HCT116 (cell line): ENCODE measurements at regions of chr7 and their contacts with region 1.

Region 1: DNA sequence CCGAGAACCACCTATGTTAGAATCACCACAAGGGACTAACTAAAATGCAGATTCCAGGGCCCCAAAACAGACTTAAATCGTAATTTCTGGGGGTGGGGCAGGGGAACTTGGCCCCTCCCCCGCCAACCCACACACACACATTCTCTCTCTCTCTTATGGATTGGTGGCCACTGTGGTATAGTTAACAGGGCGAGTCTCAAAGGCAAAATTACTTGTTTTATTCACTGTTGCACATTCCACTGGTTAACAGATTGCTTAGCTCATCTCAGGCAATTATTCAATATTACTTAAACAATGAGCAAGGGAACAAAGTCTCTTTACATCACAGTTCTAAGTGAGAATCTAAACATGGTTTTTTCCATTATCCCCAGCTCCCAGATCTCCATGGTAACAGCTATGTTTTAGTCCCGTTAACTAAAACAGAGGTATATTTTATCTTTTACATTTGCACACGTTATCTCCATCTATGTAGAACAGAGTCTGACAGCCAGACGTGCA is 38.5 kb downstream of the IGF2BP3 start:
- DNase-seq: no peak
- ATAC-seq: no peak
- H3K4me3 ChIP-seq: no peak overlapping the region
- H3K27ac ChIP-seq: no peak overlapping the region
- H3K4me1 ChIP-seq: peaks cover 15 to 27% of the 10 kb centered on the region in 2 experiments
- H3K27me3 ChIP-seq: no peaks in the 10 kb centered on the region
- CTCF ChIP-seq: no peak
- POLR2A ChIP-seq: no peak
- RAD21 ChIP-seq: no peak

Region 2: GRCh38 chr7:23471106-23471859 is 39.5 kb after region 1 on chr7:
- CTCF ChIA-PET with region 1: no interaction called
- POLR2A ChIA-PET with region 1: no interaction called
- RAD21 ChIA-PET with region 1: no interaction called
- intact Hi-C with region 1: loop called (anchors 2 kb)
- DNase-seq: peak; percentile 72
- ATAC-seq: peak; percentile 55
- H3K4me3 ChIP-seq: peak overlapping the region; percentile 75 to 77
- H3K27ac ChIP-seq: peak overlapping the region; percentile 97
- H3K4me1 ChIP-seq: peaks cover 34 to 49% of the 10 kb centered on the region in 2 experiments
- H3K27me3 ChIP-seq: peaks cover 12% of the 10 kb centered on the region
- CTCF ChIP-seq: no peak
- POLR2A ChIP-seq: no peak
- RAD21 ChIP-seq: no peak

Region 3: GRCh38 chr7:23490357-23491135 is 58.8 kb after region 1 on chr7:
- CTCF ChIA-PET with region 1: no interaction called
- POLR2A ChIA-PET with region 1: no interaction called
- RAD21 ChIA-PET with region 1: no interaction called
- intact Hi-C with region 1: no loop called
- DNase-seq: no peak
- ATAC-seq: no peak
- H3K4me3 ChIP-seq: no peak overlapping the region
- H3K27ac ChIP-seq: no peak overlapping the region
- H3K4me1 ChIP-seq: no peaks in the 10 kb centered on the region
- H3K27me3 ChIP-seq: no peaks in the 10 kb centered on the region
- CTCF ChIP-seq: no peak
- POLR2A ChIP-seq: no peak
- RAD21 ChIP-seq: no peak

Region 4: DNA sequence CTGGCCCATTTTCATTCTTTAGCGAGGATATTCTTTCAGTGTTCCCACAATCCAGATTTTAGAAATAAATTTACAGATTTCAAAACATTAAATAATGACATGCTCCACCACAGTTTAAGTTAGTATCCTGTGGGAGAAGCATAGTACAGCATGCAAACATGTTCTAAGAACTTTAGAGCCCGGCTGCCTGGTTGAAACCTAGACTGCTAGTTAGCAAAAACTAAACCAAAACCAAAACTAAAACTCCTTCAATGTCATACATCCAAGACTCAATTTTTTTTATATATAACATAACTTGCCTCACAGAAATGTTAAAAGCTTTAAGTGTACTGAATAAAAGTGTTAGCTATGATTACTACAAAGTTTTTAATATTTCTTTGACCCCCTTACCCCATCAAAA is 83.0 kb after region 1 on chr7:
- CTCF ChIA-PET with region 1: no interaction called
- POLR2A ChIA-PET with region 1: no interaction called
- RAD21 ChIA-PET with region 1: no interaction called
- intact Hi-C with region 1: loop called (anchors 5 kb)
- DNase-seq: no peak
- ATAC-seq: no peak
- H3K4me3 ChIP-seq: no peak overlapping the region
- H3K27ac ChIP-seq: no peak overlapping the region
- H3K4me1 ChIP-seq: no peaks in the 10 kb centered on the region
- H3K27me3 ChIP-seq: no peaks in the 10 kb centered on the region
- CTCF ChIP-seq: no peak
- POLR2A ChIP-seq: no peak
- RAD21 ChIP-seq: no peak

Region 5: DNA sequence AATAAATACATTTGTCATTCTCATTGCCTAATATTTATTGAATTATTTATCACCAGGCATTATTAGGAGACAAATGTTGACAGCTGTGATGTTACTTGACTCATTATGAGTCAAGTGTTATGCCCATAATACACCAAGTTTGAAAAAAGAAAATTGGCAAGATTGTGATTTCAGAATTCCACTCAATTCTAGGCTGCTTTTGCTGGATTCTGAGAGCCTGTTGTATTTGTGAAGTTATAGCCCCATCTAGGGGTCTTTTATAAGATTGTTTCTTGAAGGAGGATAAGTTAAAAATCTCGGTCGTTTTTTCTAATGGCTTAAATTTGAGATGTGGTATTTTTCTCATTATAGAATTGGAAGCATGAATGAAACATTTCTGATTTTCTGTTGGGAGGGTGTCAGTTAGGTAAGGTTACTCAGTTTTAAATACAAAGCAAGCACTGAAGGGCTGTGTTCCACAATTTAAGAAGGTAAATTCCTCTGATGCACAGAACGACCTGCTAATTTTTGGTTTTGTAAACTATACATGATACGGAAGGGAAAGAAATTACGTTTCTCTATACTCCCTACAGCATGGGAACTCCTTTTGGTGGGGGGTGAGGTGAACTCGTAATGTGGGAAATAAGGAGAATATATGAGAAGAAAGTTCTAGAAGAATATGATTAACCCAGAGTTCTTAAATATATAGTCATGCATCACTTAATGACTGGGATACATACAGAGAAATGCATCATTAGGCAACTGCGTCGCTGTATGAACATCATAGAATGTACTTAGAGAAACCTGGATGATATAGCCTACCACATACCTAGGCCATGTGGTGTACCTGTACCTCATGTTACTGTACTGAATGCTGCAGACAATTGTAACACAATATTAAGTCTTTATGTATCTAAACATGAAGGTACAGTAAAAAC is 280.9 kb after region 1 on chr7:
- CTCF ChIA-PET with region 1: no interaction called
- POLR2A ChIA-PET with region 1: no interaction called
- RAD21 ChIA-PET with region 1: no interaction called
- intact Hi-C with region 1: loop called (anchors 2 kb)
- DNase-seq: peak; percentile 67
- ATAC-seq: peak; percentile 64
- H3K4me3 ChIP-seq: no peak overlapping the region
- H3K27ac ChIP-seq: no peak overlapping the region
- H3K4me1 ChIP-seq: peaks cover 0 to 17% of the 10 kb centered on the region in 2 experiments; a peak in 2 of 4 replicates
- H3K27me3 ChIP-seq: no peaks in the 10 kb centered on the region
- CTCF ChIP-seq: peak; percentile 18 to 96 (median 70); a peak in 5 of 6 replicates
- POLR2A ChIP-seq: no peak
- RAD21 ChIP-seq: peak; percentile 92